AG04450 (cell line): ENCODE measurements at regions of chr16 and their contacts with region 1.

Region 1: GRCh38 chr16:87587636-87588035 is 14.7 kb upstream of the JPH3 start:
- DNase-seq: no peak
- H3K4me3 ChIP-seq: no peak overlapping the region
- H3K27ac ChIP-seq: no peak overlapping the region
- H3K27me3 ChIP-seq: peaks cover 14% of the 10 kb centered on the region
- CTCF ChIP-seq: no peak

Region 2: GRCh38 chr16:87276091-87276701 is 311.4 kb before region 1 on chr16:
- CTCF ChIA-PET with region 1: no interaction called
- POLR2A ChIA-PET with region 1: no interaction called
- DNase-seq: no peak
- H3K4me3 ChIP-seq: no peak overlapping the region
- H3K27ac ChIP-seq: no peak overlapping the region
- H3K27me3 ChIP-seq: peaks cover 4% of the 10 kb centered on the region
- CTCF ChIP-seq: no peak

Region 3: DNA sequence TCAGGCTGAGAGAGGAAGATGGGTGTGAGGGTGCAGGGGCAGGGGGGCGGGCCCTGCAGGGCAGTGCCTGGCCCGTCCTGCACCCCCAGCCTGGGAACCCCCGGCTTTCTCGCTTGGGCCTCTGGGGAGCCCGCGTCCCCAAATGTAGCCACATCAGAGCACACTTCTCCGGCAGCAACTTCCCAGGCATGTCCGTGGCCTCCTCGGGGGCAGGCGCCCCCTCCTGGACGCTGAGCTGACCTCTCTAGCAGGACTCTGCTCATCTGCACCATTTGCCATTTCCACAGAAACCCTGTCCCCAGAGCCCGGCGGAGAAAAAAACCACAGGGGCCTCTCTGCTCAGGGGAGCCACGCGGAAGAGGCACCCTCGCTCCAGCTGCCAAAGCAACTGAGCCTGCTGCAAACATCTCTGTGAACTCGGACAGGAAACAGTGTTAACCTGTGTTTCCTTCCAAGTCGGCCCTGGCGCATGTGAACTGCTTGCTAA is 114.7 kb after region 1 on chr16:
- CTCF ChIA-PET with region 1: interaction called, 16 read pairs
- POLR2A ChIA-PET with region 1: no interaction called
- DNase-seq: no peak
- H3K4me3 ChIP-seq: no peak overlapping the region
- H3K27ac ChIP-seq: no peak overlapping the region
- H3K27me3 ChIP-seq: no peaks in the 10 kb centered on the region
- CTCF ChIP-seq: peak; percentile 69